Posterior vena cava (tissue), 2 donors: ENCODE measurements at regions of chr3 and their contacts with region 1.

Region 1: DNA sequence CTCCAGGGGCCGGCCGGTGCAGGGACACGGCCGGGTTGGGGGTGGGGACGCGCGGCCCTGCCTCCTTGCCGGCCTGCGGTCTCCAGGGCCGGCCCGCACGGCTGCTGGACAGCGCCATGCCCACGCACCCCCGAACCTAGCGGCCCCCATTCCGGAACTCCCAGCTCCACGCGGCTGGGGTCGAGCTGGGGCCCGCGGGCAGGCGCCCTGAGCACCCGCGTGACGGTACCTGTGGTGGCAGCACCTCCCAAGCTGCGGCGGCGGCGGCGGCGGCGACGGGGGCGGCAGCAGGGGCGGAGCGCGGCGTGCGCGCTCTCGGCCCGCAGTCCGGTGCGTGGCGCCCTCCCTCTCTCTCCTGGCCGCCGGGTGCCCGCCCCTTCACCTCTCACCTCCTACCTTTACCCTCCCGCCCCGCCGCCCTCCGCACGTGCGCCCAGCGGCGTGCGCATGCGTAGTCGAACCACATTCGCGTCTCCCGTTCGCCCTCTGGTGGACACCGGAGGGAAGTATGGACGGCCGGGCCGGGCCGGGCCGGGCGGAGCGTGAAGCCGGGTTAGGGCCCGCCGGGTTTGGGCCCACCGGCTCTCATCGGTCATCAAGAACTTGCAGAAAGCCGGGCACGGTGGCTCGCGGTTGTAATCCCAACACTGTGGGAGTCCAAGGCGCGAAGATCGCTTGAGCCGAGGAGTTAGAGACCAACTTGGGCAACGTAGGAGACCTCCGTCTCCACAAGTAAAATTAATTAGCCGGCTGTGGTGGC is at the start of gene SCAP:
- DNase-seq: peak; percentile 98
- total RNA-seq, gene SCAP: 49.8 to 50.8 TPM

Region 2: DNA sequence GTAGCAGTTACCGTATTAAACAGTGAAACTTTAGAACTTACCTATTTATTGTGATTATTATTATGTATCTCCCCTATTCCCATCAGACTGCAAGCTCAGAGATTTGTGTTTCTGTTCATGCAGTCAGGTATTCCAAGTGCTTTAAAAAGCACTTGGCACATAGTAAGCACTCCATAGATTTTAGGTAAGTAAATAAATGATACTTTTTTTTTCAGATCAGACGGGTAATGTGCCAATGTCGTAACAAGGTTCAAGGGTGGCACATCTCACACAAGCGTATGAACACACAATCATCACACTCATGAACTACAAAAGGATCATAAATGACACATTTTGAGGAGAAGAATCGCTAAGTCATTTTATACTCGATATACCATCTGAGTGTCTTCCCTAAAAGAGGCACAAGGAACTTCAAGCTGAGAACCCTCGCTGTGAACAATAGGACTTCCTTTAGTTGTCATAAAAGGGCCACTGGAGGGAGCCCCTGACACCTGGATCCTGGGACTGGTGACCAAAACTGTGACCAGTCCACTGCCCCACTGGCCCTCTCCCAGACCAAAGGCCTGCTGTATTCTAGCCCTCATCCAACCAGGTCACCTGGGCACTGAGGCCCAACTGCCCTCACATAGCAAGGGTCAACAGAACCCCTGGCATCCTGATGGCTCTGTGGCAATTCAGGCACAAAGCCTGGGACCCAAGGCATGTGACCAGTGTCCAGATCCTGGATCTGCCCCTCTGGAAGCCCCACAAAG is 225.3 kb before region 1 on chr3:
- intact Hi-C with region 1: no loop called
- DNase-seq: peak; percentile 59

Region 3: DNA sequence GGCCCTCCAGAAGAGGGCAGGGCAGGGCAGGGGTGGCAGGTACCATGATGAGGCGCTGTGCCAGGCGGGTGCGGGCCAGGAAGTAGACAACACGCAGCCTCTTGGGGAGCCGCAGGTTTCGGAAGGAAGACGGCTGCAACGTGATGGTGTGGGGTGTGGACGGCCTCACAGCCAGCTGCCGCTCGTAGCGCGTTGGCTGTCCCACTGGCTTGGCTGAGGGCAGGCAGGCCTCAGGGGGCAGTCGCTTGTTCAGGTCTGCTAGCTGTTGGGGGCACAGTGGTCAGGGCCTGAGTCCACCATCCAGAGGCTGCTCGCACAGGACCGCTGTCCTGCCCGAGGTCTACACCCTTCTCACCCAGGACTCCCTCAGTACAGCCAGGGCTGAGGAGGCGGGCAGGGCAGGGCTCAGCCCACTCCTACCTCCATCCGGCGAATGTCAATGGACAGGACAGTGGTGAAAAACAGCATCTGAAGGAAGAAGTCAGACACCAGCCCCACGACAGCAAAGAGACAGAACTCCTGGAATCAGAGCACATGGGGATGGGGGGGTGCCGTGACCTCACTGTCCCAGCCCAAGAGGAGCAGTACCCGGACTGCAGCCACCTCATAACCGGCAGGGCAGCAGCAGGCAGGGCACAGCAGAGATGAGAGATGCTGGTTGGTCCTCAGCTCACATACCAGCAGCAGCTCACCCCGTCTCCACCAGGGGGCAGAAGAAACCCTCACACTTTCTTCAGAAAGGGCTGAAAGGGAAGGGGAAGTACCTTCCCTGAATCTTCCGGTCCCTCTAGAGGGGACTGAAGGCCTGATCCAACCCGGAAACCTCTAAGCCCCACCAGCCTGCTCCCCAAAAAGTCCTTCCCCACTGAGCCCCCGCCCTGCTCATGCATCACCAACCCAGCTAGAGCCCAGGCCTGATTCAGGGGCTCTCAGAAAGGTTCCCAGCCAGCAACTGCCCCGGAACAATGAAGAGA is 55.0 kb before region 1 on chr3:
- intact Hi-C with region 1: loop called (anchors 5 kb)
- DNase-seq: peak; percentile 95